ENCODE measurements at regions of chr15 and their contacts with region 1.

Region 1: GRCh38 chr15:26551473-26551872 is 221.4 kb downstream of the GABRB3 start:
- DNase-seq: no peak
- H3K4me3 Mint-ChIP-seq: no peak overlapping the region
- H3K27ac Mint-ChIP-seq: no peak overlapping the region
- H3K4me1 Mint-ChIP-seq: no peaks in the 10 kb centered on the region
- H3K27me3 Mint-ChIP-seq: no peaks in the 10 kb centered on the region

Region 2: DNA sequence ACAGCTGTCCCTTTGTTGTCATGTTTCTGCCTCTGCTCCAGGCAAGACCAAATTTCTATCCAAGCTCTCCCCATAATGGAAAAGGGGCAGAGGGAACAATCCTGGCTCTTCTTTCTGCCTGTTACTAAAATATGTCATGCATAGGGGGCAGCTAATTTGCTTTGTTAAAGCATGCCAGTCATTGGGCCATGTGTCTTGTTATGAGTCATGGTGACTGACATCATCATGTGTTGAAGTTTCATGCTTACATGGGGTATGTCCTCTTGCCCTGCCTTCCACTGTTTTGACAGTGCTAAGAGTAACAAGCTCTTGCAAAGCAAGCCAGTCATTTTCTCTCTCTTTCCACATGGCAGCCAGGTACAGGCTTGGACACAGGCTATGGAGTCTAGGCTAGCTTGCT is 47.5 kb before region 1 on chr15:
- intact Hi-C with region 1: loop called (anchors 10 kb)
- DNase-seq: no peak
- H3K4me3 Mint-ChIP-seq: no peak overlapping the region
- H3K27ac Mint-ChIP-seq: no peak overlapping the region
- H3K4me1 Mint-ChIP-seq: no peaks in the 10 kb centered on the region
- H3K27me3 Mint-ChIP-seq: no peaks in the 10 kb centered on the region